ACHN (cell line): ENCODE measurements at regions of chr7 and their contacts with region 1.

Region 1: GRCh38 chr7:155598810-155599210 is 45.7 kb upstream of the RBM33 start:
- DNase-seq: peak; percentile 87

Region 2: DNA sequence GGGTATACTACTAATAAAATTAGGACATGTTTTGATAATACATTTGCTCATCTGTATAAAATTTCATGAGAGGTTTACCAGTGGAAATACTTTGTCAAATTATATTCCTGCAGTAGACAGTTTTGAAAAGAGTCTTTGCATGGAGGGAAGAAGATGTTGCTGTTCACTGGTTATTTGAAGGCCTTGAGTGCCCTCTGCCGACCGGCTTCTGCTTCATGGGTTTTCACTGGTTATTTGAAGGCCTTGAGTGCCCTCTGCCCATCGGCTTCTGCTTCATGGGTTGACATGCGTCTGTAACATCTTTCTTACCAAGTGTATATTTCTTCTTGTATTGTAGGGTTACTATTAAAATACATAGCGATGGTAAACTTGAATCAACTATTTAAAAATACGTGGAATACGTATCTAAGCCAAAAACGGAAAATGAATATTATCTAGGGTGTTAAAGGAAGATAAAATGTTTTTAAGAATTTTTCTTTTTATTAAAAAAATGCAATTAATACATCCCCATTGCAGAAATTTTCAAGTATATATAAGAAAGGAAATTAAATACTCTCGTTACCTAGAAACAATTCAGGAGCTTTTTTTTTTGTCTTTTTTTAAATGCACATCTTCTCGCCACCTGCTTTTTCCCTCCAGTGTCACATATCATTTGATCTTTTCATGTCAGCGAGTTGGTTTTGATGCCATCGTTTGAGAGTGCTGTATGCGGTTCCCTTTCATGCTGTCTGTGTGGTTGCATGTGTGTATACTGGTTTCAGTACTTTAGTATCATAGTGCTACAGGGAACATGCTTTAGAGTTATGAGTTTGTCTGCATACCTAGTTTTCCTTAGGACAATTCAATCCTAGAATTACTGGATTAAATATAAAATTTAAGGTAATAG is 140.1 kb after region 1 on chr7:
- in situ Hi-C with region 1: loop called (anchors 25 kb)
- DNase-seq: peak; percentile 81